Calu3 (cell line): ENCODE measurements at regions of chr20 and their contacts with region 1.

Region 1: GRCh38 chr20:31806564-31807355 is 12.4 kb upstream of the MYLK2 start:
- DNase-seq: no peak
- H3K4me3 Mint-ChIP-seq: no peak overlapping the region
- H3K27ac Mint-ChIP-seq: no peak overlapping the region
- H3K4me1 Mint-ChIP-seq: no peaks in the 10 kb centered on the region
- H3K27me3 Mint-ChIP-seq: no peaks in the 10 kb centered on the region
- CTCF ChIP-seq: no peak

Region 2: DNA sequence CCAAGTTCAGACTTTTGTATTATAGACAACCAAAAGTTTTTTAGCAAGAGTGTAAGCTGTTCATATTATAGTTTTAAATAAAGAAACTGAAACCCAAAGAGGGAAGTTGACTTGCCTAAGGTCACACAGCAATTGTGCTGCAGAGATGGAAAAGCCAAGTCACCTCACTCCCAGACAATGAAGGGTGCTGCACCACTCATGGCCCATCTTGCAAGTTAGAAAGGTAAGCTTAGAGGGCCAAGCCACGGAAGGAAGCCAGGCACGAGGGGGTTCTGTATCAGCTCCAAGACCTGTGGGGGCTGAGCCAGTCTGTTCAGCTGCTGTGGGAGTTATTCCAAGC is 332.7 kb before region 1 on chr20:
- CTCF ChIA-PET with region 1: no interaction called
- intact Hi-C with region 1: no loop called
- DNase-seq: no peak
- H3K4me3 Mint-ChIP-seq: no peak overlapping the region
- H3K27ac Mint-ChIP-seq: no peak overlapping the region
- H3K4me1 Mint-ChIP-seq: no peaks in the 10 kb centered on the region
- H3K27me3 Mint-ChIP-seq: peaks cover 73% of the 10 kb centered on the region
- CTCF ChIP-seq: no peak

Region 3: GRCh38 chr20:31712564-31713311 is 94.0 kb before region 1 on chr20:
- CTCF ChIA-PET with region 1: no interaction called
- intact Hi-C with region 1: no loop called
- DNase-seq: peak; percentile 91
- H3K4me3 Mint-ChIP-seq: peak overlapping the region; percentile 97
- H3K27ac Mint-ChIP-seq: peak overlapping the region; percentile 94
- H3K4me1 Mint-ChIP-seq: peaks cover 100% of the 10 kb centered on the region
- H3K27me3 Mint-ChIP-seq: no peaks in the 10 kb centered on the region
- CTCF ChIP-seq: no peak

Region 4: GRCh38 chr20:31780839-31781238 is 25.9 kb before region 1 on chr20:
- CTCF ChIA-PET with region 1: interaction called, 14 read pairs
- intact Hi-C with region 1: no loop called
- DNase-seq: no peak
- H3K4me3 Mint-ChIP-seq: no peak overlapping the region
- H3K27ac Mint-ChIP-seq: no peak overlapping the region
- H3K4me1 Mint-ChIP-seq: no peaks in the 10 kb centered on the region
- H3K27me3 Mint-ChIP-seq: no peaks in the 10 kb centered on the region
- CTCF ChIP-seq: no peak